Activated CD4-positive, alpha-beta T cell treated with anti-CD3 and anti-CD28 coated beads, Interleukin-2, amount 10 ng/mL, durations not matched to agents 24 days and 14 days (primary cell): ENCODE measurements at regions of chr7 and their contacts with region 1.

Region 1: DNA sequence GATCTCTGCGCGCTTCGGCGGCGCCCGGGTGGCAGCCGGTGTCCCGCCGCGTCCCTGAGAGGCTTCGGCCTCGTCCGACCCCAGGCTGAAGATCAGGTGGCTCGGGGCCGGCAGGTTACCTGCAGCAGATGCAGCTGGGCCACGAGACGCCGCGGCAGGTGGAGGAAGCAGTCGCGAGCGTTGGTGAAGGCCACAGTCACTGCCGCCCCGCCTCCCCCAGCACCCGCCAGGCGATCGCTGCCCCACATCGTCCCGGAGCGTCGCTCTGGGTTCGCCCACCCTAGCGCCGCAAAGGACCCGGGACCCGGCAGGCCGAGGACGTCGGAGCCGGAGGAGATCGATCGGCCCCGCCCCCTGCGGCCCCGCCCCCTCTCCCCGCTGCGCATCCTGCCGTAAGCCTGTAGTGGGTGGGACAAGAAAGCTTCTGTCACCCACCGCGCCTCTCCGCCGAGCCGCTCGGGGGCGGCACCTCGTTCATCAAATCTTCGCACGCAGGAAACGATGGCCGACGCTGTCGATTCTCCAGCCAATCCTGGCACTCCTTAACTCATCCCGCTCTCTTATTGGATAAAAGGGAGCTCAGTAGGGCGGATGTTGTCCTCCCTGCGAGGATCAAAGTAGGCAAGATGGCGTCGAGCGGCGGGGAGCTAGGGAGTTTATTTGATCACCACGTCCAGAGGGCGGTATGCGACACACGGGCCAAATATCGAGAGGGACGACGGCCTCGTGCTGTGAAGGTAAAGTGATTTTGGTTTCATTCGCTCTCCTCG is at the starts of genes PEX1 and RBM48:
- DNase-seq: peak; percentile 98
- H3K4me3 Mint-ChIP-seq: peak within 1 kb of the TSS; percentile 98
- H3K27ac Mint-ChIP-seq: peak within 1 kb of the TSS; percentile 98
- H3K4me1 Mint-ChIP-seq: peaks cover 22% of the 10 kb centered on the region
- H3K27me3 Mint-ChIP-seq: peaks cover 2% of the 10 kb centered on the region
- total RNA-seq, gene PEX1: 14.4 and 14.8 TPM in 2 replicates
- total RNA-seq, gene RBM48: 14.4 and 17.3 TPM in 2 replicates

Region 2: GRCh38 chr7:91940572-91941341 is 587.6 kb before region 1 on chr7 and contains the start of gene AKAP9:
- intact Hi-C with region 1: loop called (anchors 1 kb)
- DNase-seq: peak; percentile 97
- H3K4me3 Mint-ChIP-seq: peak within 1 kb of the TSS; percentile 89
- H3K27ac Mint-ChIP-seq: peak within 1 kb of the TSS; percentile 88
- H3K4me1 Mint-ChIP-seq: peaks cover 23% of the 10 kb centered on the region
- H3K27me3 Mint-ChIP-seq: peaks cover 8% of the 10 kb centered on the region
- total RNA-seq, gene AKAP9: 36.0 and 38.2 TPM in 2 replicates

Region 3: DNA sequence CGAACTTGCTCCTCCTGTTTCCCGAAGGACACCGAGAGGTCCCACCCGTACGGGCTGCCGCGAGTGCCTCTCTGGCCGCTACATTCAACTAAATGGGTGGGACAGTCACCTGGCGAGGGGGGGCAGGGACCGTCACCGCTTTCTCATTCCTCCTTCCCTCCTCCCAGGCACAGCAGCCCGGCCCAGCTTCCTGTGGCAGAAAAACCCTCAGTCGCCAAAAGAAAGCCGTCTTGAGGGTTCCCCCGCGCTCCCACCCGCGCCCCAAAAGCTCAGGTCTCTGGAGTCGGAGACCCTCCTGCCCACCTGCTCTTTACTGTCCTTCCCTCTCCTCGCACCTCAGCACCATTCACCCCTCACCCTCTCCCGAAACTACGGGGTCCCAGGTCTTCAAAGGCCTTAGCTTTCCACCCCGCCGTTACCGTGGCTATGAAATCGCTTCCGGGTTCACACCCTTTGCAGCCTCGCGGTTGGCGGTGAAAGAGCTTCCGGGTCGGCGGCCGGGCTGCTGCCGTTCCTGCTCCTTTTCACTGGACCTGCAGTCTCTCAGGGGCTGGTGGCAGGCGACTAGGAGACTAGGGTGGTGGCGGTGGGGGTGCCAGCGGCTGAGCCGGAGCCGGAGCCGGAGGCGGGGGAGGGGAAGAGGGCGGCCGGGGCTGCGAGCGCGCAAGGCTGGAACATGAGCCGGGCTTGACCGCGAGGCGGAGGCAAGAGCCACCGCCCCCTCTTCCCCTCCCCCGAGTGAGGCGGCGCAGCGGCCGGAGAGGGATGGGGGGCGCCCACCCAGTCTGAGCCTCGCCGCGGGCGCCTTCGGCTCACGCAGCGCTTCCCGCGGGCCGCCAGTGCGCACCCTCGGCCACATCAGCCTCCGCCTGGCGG is 282.6 kb before region 1 on chr7 and contains the starts of genes ANKIB1 and KRIT1:
- intact Hi-C with region 1: loop called (anchors 5 kb)
- DNase-seq: peak; percentile 96
- H3K4me3 Mint-ChIP-seq: peak within 1 kb of the TSS; percentile 98
- H3K27ac Mint-ChIP-seq: peak within 1 kb of the TSS; percentile 99
- H3K4me1 Mint-ChIP-seq: peaks cover 32% of the 10 kb centered on the region
- H3K27me3 Mint-ChIP-seq: no peaks in the 10 kb centered on the region
- total RNA-seq, gene ANKIB1: 54.3 and 55.7 TPM in 2 replicates
- total RNA-seq, gene KRIT1: 47.3 and 49.2 TPM in 2 replicates

Region 4: GRCh38 chr7:92590711-92591310 is 62.4 kb after region 1 on chr7:
- intact Hi-C with region 1: loop called (anchors 1 kb)
- DNase-seq: no peak
- H3K4me3 Mint-ChIP-seq: peak overlapping the region; percentile 97
- H3K27ac Mint-ChIP-seq: peak overlapping the region; percentile 30
- H3K4me1 Mint-ChIP-seq: peaks cover 35% of the 10 kb centered on the region
- H3K27me3 Mint-ChIP-seq: no peaks in the 10 kb centered on the region

Region 5: DNA sequence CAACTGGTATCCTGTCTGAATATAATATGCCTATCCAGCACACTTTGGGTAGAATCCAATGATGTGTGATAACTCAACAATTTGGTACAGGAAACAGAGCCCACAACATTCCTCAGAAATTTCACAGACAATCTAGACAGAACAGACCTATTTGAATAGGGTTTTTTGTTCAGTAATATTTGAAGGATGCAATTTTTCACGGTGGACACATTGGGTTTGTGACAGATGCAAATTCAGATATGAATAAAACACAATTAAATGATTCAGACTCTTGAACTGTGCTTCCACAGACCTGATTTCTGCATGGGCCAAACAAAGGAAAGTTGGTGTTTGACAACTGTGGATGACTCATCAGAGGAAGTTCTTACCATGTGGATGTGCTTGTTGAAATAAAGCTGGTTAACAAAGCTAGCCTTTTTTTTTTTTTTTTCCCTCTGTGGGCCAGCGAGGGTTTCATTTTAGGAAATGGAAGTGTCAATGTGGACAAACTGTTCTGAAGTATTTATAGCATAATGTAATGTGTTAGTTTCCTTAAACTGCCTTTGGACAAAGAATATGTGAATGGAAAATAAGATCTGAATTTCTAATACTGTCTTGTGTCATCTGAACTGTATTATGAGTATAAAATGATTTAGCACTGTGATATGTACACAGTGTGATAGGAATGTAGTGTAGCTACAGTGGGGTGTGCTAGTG is 105.0 kb after region 1 on chr7:
- intact Hi-C with region 1: no loop called
- DNase-seq: peak; percentile 84
- H3K4me3 Mint-ChIP-seq: peak overlapping the region; percentile 65
- H3K27ac Mint-ChIP-seq: peak overlapping the region; percentile 97
- H3K4me1 Mint-ChIP-seq: peaks cover 64% of the 10 kb centered on the region
- H3K27me3 Mint-ChIP-seq: no peaks in the 10 kb centered on the region

Region 6: GRCh38 chr7:93055543-93056107 is 527.3 kb after region 1 on chr7:
- intact Hi-C with region 1: loop called (anchors 5 kb)
- DNase-seq: peak; percentile 62
- H3K4me3 Mint-ChIP-seq: no peak overlapping the region
- H3K27ac Mint-ChIP-seq: no peak overlapping the region
- H3K4me1 Mint-ChIP-seq: peaks cover 13% of the 10 kb centered on the region
- H3K27me3 Mint-ChIP-seq: peaks cover 6% of the 10 kb centered on the region

Region 7: GRCh38 chr7:93231799-93232672 is 703.7 kb after region 1 on chr7 and contains the start of gene VPS50:
- intact Hi-C with region 1: loop called (anchors 1 kb)
- DNase-seq: peak; percentile 98
- H3K4me3 Mint-ChIP-seq: peak within 1 kb of the TSS; percentile 99
- H3K27ac Mint-ChIP-seq: peak within 1 kb of the TSS; percentile 93
- H3K4me1 Mint-ChIP-seq: peaks cover 13% of the 10 kb centered on the region
- H3K27me3 Mint-ChIP-seq: peaks cover 4% of the 10 kb centered on the region
- total RNA-seq, gene VPS50: 14.7 and 17.1 TPM in 2 replicates